GM12878 (cell line): ENCODE measurements at regions of chr11 and their contacts with region 1.

Region 1: GRCh38 chr11:31870609-31871309 is 59.6 kb upstream of the PAX6 start:
- DNase-seq: no peak
- ATAC-seq: peak; percentile 84
- H3K4me3 ChIP-seq: no peak overlapping the region
- H3K27ac ChIP-seq: no peak overlapping the region
- H3K4me1 ChIP-seq: no peaks in the 10 kb centered on the region
- H3K27me3 ChIP-seq: no peaks in the 10 kb centered on the region; a peak in 2 of 4 replicates
- CTCF ChIP-seq: peak; percentile 59 to 66 (median 64); a peak in 5 of 6 replicates
- EP300 ChIP-seq: no peak
- POLR2A ChIP-seq: no peak
- RAD21 ChIP-seq: peak; percentile 90

Region 2: GRCh38 chr11:31107062-31107461 is 763.7 kb before region 1 on chr11:
- CTCF ChIA-PET with region 1: interaction called, 8 read pairs
- POLR2A ChIA-PET with region 1: no interaction called
- RAD21 ChIA-PET with region 1: interaction called, 6 read pairs
- SMC1A ChIA-PET with region 1: interaction called, 5 read pairs
- in situ Hi-C with region 1: loop called (anchors 25 kb)
- intact Hi-C with region 1: loop called (anchors 2 kb)
- DNase-seq: no peak
- ATAC-seq: peak; percentile 98
- H3K4me3 ChIP-seq: no peak overlapping the region
- H3K27ac ChIP-seq: no peak overlapping the region
- H3K4me1 ChIP-seq: no peaks in the 10 kb centered on the region
- H3K27me3 ChIP-seq: no peaks in the 10 kb centered on the region
- CTCF ChIP-seq: peak; percentile 64 to 78 (median 77)
- EP300 ChIP-seq: no peak
- POLR2A ChIP-seq: no peak
- RAD21 ChIP-seq: peak; percentile 86

Region 3: DNA sequence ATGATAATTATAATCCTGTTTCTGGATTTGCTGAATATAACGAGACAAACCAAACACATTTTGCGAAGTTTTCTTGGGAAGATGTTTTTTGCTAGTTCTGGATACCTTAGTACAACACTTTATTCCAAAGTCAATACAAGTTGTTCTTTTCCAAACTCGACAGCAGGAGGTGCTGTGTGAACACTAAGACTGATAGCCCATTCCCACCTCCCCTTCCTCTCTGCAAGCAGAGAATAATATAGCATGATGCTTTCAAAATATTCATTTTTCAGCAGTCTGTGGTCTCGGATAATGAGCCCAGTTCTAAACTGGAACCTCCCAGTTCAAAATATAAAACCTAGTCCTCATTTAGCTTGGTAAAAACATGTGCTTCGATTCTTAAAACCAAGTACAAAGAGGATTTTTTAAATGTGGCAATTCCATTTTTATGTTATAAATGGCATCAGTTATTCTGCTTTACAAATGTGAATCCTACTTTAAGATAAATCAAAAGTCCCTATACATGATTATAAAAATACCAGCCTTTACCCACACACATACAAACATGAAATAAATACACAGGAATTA is 630.3 kb before region 1 on chr11:
- CTCF ChIA-PET with region 1: interaction called, 17 read pairs
- POLR2A ChIA-PET with region 1: no interaction called
- RAD21 ChIA-PET with region 1: interaction called, 4 read pairs
- SMC1A ChIA-PET with region 1: interaction called, 7 read pairs
- in situ Hi-C with region 1: no loop called
- intact Hi-C with region 1: loop called (anchors 5 kb)
- DNase-seq: no peak
- ATAC-seq: peak; percentile 68
- H3K4me3 ChIP-seq: no peak overlapping the region
- H3K27ac ChIP-seq: no peak overlapping the region
- H3K4me1 ChIP-seq: no peaks in the 10 kb centered on the region
- H3K27me3 ChIP-seq: no peaks in the 10 kb centered on the region
- CTCF ChIP-seq: peak; percentile 50 to 54 (median 54)
- EP300 ChIP-seq: no peak
- POLR2A ChIP-seq: no peak
- RAD21 ChIP-seq: peak; percentile 61

Region 4: GRCh38 chr11:31340903-31341572 is 529.7 kb before region 1 on chr11:
- CTCF ChIA-PET with region 1: interaction called, 11 read pairs
- POLR2A ChIA-PET with region 1: no interaction called
- RAD21 ChIA-PET with region 1: interaction called, 4 read pairs
- SMC1A ChIA-PET with region 1: interaction called, 4 read pairs
- in situ Hi-C with region 1: no loop called
- intact Hi-C with region 1: no loop called
- DNase-seq: no peak
- ATAC-seq: peak; percentile 69
- H3K4me3 ChIP-seq: no peak overlapping the region
- H3K27ac ChIP-seq: no peak overlapping the region
- H3K4me1 ChIP-seq: no peaks in the 10 kb centered on the region
- H3K27me3 ChIP-seq: no peaks in the 10 kb centered on the region
- CTCF ChIP-seq: peak; percentile 46 to 71 (median 70); a peak in 5 of 6 replicates
- EP300 ChIP-seq: no peak
- POLR2A ChIP-seq: no peak
- RAD21 ChIP-seq: peak; percentile 55

Region 5: DNA sequence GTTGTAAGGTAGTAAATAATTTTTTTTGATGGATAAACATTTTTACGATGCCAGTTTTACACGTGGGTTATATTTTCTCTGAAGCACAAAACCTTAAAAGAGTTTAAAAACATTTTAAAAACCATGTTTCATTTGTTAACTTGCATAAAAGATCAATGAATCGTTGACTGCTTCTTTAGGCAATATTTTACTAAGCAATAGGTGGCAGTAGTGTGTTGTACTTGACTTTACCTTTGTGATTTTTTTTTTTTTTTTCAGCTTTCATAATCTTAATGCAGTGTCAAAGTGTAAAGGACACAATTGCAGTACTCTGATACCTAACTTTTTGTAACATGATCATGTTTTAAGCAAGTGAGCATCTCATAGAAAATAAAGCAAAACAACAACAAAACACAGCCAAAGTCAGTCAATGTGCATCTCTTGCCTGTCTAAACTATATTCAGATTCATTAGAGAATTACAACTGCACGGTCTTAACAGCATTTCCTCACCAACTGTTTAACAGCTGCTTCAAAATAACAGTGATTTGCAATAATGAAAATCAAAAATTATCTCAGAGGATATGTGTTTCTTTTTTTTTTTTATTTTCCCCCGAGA is 473.4 kb before region 1 on chr11:
- CTCF ChIA-PET with region 1: interaction called, 44 read pairs
- POLR2A ChIA-PET with region 1: no interaction called
- RAD21 ChIA-PET with region 1: interaction called, 11 read pairs
- SMC1A ChIA-PET with region 1: interaction called, 14 read pairs
- in situ Hi-C with region 1: loop called (anchors 5 kb)
- intact Hi-C with region 1: loop called (anchors 1 kb)
- DNase-seq: no peak
- ATAC-seq: peak; percentile 70
- H3K4me3 ChIP-seq: no peak overlapping the region
- H3K27ac ChIP-seq: no peak overlapping the region
- H3K4me1 ChIP-seq: no peaks in the 10 kb centered on the region
- H3K27me3 ChIP-seq: no peaks in the 10 kb centered on the region
- CTCF ChIP-seq: peak; percentile 43 to 72 (median 55); a peak in 5 of 6 replicates
- EP300 ChIP-seq: no peak
- POLR2A ChIP-seq: no peak
- RAD21 ChIP-seq: peak; percentile 78

Region 6: GRCh38 chr11:31487848-31488247 is 382.9 kb before region 1 on chr11:
- CTCF ChIA-PET with region 1: interaction called, 8 read pairs
- POLR2A ChIA-PET with region 1: no interaction called
- RAD21 ChIA-PET with region 1: no interaction called
- SMC1A ChIA-PET with region 1: interaction called, 4 read pairs
- in situ Hi-C with region 1: no loop called
- intact Hi-C with region 1: loop called (anchors 1 kb)
- DNase-seq: no peak
- ATAC-seq: peak; percentile 74
- H3K4me3 ChIP-seq: no peak overlapping the region
- H3K27ac ChIP-seq: no peak overlapping the region
- H3K4me1 ChIP-seq: no peaks in the 10 kb centered on the region
- H3K27me3 ChIP-seq: no peaks in the 10 kb centered on the region
- CTCF ChIP-seq: peak; percentile 2 to 47 (median 21); a peak in 2 of 6 replicates
- EP300 ChIP-seq: no peak
- POLR2A ChIP-seq: no peak
- RAD21 ChIP-seq: peak; percentile 57

Region 7: DNA sequence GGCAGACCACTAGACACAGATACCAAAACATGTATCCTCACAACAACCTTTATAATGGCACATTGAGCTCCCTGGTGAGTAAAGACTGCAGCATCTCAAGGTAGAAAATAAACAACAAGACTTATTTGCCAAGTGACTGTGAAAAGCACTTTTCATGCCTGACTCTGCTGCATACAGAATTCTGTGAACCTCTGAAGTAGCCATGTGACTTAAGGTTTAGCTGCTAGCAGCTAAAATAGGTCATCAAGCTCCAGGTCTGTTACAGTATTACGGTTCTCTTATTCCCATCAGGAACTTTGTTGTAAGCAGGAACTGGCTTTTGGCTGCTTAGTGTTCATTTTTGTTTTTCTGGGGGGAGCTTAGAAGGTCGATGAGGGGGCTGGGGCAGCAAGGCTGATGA is 199.1 kb before region 1 on chr11:
- CTCF ChIA-PET with region 1: no interaction called
- POLR2A ChIA-PET with region 1: no interaction called
- RAD21 ChIA-PET with region 1: no interaction called
- SMC1A ChIA-PET with region 1: no interaction called
- in situ Hi-C with region 1: no loop called
- intact Hi-C with region 1: no loop called
- DNase-seq: no peak
- ATAC-seq: no peak
- H3K4me3 ChIP-seq: no peak overlapping the region
- H3K27ac ChIP-seq: no peak overlapping the region
- H3K4me1 ChIP-seq: no peaks in the 10 kb centered on the region
- H3K27me3 ChIP-seq: no peaks in the 10 kb centered on the region
- CTCF ChIP-seq: no peak
- EP300 ChIP-seq: no peak
- POLR2A ChIP-seq: no peak
- RAD21 ChIP-seq: no peak

Region 8: DNA sequence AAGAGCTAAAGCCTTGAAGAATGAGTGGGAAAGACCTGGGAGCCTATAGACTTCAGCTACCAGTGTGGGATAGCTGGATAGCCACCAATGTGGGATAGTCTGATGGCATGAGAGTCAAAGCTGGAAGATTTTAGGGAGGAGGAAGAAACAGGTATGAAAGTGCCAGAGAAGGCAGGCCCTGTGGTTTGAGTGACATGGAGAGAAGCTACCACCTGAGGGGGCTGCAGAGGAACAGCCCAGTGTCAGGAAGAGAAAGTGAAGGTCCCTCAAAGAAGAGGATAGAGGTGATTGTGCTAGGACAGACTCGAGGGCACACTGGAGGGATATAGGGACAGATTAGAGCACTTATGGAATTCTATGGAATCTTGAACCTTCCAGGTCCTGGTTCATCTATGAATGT is 36.5 kb before region 1 on chr11:
- CTCF ChIA-PET with region 1: no interaction called
- POLR2A ChIA-PET with region 1: no interaction called
- RAD21 ChIA-PET with region 1: no interaction called
- SMC1A ChIA-PET with region 1: no interaction called
- in situ Hi-C with region 1: no loop called
- intact Hi-C with region 1: no loop called
- DNase-seq: no peak
- ATAC-seq: no peak
- H3K4me3 ChIP-seq: no peak overlapping the region
- H3K27ac ChIP-seq: no peak overlapping the region
- H3K4me1 ChIP-seq: no peaks in the 10 kb centered on the region
- H3K27me3 ChIP-seq: no peaks in the 10 kb centered on the region; a peak in 1 of 4 replicates
- CTCF ChIP-seq: 0 out of 6 replicates have a peak, but pooled peaks of 1 of the 3 experiments have one; percentile 1
- EP300 ChIP-seq: no peak
- POLR2A ChIP-seq: no peak
- RAD21 ChIP-seq: no peak

Region 9: GRCh38 chr11:31860391-31860790 is 10.4 kb before region 1 on chr11:
- CTCF ChIA-PET with region 1: interaction called, 13 read pairs
- POLR2A ChIA-PET with region 1: no interaction called
- RAD21 ChIA-PET with region 1: no interaction called
- SMC1A ChIA-PET with region 1: interaction called, 4 read pairs
- in situ Hi-C with region 1: no loop called
- intact Hi-C with region 1: no loop called
- DNase-seq: no peak
- ATAC-seq: no peak
- H3K4me3 ChIP-seq: no peak overlapping the region
- H3K27ac ChIP-seq: no peak overlapping the region
- H3K4me1 ChIP-seq: no peaks in the 10 kb centered on the region
- H3K27me3 ChIP-seq: no peaks in the 10 kb centered on the region; a peak in 1 of 4 replicates
- CTCF ChIP-seq: no peak
- EP300 ChIP-seq: no peak
- POLR2A ChIP-seq: no peak
- RAD21 ChIP-seq: no peak